AG04450 (cell line): ENCODE measurements at regions of chr7 and their contacts with region 1.

Region 1: DNA sequence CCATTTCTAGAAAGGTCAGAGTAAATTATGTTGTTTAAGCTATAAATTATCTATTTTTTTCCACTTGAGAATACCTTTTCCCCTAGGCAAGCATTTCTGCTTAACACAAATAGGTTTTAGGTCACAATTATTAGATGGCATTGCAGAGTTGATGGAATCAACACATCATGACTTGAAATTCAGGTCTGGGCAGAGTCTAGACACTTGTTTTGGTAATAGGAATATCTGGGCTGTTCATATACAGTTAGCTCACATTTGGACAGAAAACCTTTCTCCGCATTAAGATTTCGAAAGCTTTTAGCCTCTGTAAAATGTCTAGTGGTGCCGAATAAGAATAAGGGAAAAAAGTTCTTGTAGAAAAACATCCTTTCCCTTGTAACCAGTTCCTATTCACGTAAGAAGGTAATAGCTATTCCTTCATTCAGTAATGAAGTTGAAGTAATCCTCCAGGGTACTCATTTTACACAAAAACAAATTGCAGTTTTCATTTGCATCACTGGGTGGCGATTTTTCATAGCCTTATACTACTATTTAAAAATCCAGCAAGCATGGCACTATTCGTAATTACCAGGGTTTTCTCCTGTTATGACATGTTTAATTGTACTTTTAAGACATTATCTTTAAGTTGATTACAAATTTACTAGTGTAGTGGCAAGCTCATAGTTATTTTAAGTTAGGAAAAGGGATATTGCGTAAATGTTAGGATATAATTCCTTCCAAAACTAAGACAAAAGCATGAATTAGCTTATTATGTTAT is 37.0 kb downstream of the RPA3 start:
- DNase-seq: no peak
- H3K4me3 ChIP-seq: no peak overlapping the region
- H3K27ac ChIP-seq: no peak overlapping the region
- H3K27me3 ChIP-seq: no peaks in the 10 kb centered on the region
- CTCF ChIP-seq: peak; percentile 70

Region 2: GRCh38 chr7:7640221-7641128 is 40.9 kb before region 1 on chr7 and contains the start of gene UMAD1:
- CTCF ChIA-PET with region 1: interaction called, 13 read pairs
- POLR2A ChIA-PET with region 1: no interaction called
- DNase-seq: peak; percentile 95
- H3K4me3 ChIP-seq: peak within 1 kb of the TSS; percentile 100
- H3K27ac ChIP-seq: peak within 1 kb of the TSS; percentile 78
- H3K27me3 ChIP-seq: no peaks in the 10 kb centered on the region
- CTCF ChIP-seq: no peak
- polyA plus RNA-seq, gene UMAD1: 16.5 and 22.8 TPM in 2 replicates

Region 3: GRCh38 chr7:7719236-7719635 is 37.9 kb after region 1 on chr7:
- CTCF ChIA-PET with region 1: interaction called, 10 read pairs
- POLR2A ChIA-PET with region 1: no interaction called
- DNase-seq: peak; percentile 94
- H3K4me3 ChIP-seq: no peak overlapping the region
- H3K27ac ChIP-seq: no peak overlapping the region
- H3K27me3 ChIP-seq: no peaks in the 10 kb centered on the region
- CTCF ChIP-seq: no peak

Region 4: DNA sequence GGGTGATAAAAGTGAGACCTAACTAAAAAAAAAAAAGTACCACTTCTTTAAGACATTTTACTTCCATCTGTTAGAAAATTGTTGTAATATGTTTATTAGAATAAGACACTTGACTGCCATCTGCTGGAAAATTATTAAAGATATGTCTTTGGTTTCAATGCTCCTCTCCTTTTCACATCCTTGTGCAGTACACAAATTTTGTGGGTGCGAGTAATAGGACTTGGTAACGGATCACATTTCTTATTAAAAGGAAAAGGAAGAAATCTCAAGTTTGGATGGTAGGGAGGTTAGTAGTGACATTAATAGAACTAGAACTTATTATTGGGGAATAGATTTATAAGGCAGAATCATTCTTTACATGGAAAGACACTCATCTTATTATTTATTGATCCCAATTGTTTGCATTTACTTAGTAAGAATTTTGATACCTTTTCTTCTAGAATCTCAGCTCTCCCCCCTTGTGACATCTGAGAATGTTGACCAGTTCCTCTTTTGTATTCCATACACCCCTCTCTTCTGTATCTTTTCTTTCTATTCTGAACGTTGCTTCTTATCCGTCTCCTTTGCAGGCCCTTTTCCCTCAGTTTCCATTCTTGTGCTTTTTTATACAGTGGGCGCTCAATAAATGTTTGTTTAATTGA is 80.1 kb after region 1 on chr7:
- CTCF ChIA-PET with region 1: interaction called, 80 read pairs
- POLR2A ChIA-PET with region 1: no interaction called
- DNase-seq: no peak
- H3K4me3 ChIP-seq: no peak overlapping the region
- H3K27ac ChIP-seq: no peak overlapping the region
- H3K27me3 ChIP-seq: no peaks in the 10 kb centered on the region
- CTCF ChIP-seq: peak; percentile 43

Region 5: GRCh38 chr7:7996576-7996975 is 315.2 kb after region 1 on chr7:
- CTCF ChIA-PET with region 1: interaction called, 13 read pairs
- POLR2A ChIA-PET with region 1: no interaction called
- DNase-seq: no peak
- H3K4me3 ChIP-seq: no peak overlapping the region
- H3K27ac ChIP-seq: no peak overlapping the region
- H3K27me3 ChIP-seq: no peaks in the 10 kb centered on the region
- CTCF ChIP-seq: no peak

Region 6: DNA sequence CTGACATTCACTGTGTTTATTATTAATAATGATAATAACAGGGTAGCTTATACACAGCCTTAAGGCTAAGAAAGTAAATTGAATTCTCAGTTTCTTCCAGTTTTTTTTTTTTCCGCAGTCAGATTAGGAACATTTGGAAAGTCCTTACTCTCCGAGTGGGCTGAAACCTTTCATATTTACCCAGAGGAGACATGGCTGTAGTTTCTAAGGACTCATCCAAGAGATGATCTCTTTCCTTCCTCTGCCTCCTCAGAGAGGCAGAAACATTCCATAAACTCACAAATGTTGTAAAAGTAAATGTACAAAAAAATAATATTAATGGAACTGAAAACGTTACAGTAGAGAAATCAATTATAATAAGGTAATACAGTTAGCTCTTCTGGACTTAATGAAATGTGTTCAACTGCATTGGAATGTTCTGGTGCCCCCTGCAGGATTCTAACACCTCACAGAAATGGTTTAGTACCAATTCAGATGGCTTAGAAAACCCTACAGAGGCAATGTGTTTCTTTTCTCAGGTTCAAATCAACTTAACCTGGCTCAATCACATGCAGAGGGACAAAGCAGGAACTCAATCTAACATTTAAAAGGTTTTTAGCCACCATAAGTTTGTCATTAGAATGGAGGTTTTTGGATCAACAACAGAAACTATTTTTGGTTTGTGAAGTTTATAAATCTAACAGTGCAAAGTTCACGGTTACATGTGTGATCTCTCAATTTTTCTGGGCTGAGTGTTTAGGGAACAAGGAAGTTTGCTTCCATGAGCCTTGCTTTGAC is 508.9 kb after region 1 on chr7:
- CTCF ChIA-PET with region 1: interaction called, 25 read pairs
- POLR2A ChIA-PET with region 1: no interaction called
- DNase-seq: peak; percentile 6
- H3K4me3 ChIP-seq: no peak overlapping the region
- H3K27ac ChIP-seq: no peak overlapping the region
- H3K27me3 ChIP-seq: no peaks in the 10 kb centered on the region
- CTCF ChIP-seq: peak; percentile 64

Region 7: DNA sequence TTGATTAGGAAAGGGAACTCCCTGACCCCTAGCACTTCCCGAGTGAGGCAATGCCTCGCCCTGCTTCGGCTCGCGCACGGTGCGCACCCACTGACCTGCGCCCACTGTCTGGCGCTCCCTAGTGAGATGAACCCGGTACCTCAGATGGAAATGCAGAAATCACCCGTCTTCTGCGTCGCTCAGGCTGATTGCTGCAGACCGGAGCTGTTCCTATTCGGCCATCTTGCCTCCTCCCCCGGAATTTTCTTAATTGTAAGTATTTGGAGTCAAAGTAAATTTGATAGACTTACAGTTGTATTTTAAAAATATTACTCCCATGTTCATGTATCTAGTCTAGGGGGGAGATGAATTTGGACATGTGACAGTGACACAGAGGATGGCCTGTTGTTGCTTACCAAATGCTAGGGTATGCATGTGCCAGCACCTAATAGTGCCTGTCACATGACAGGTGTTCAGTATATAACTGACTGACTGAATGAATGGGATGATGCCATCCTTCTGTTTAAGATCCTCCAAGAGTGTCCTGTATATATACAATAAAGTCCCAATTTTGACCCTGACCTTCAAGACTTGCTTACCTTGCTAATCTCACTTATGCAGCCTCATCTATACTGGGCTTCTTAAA is 622.7 kb after region 1 on chr7:
- CTCF ChIA-PET with region 1: no interaction called
- POLR2A ChIA-PET with region 1: no interaction called
- DNase-seq: no peak
- H3K4me3 ChIP-seq: no peak overlapping the region
- H3K27ac ChIP-seq: no peak overlapping the region
- H3K27me3 ChIP-seq: no peaks in the 10 kb centered on the region
- CTCF ChIP-seq: no peak